ENCODE measurements at regions of chr1 and their contacts with region 1.

Region 1: GRCh38 chr1:25895365-25895993 is 10.7 kb downstream of the STMN1 start:
- DNase-seq: peak; percentile 93
- ATAC-seq: peak; percentile 97
- H3K4me3 Mint-ChIP-seq: no peak overlapping the region
- H3K27ac Mint-ChIP-seq: no peak overlapping the region
- H3K4me1 Mint-ChIP-seq: peaks cover 24% of the 10 kb centered on the region
- H3K27me3 Mint-ChIP-seq: no peaks in the 10 kb centered on the region

Region 2: GRCh38 chr1:25819576-25820246 is 75.8 kb before region 1 on chr1 and contains the start of gene MTFR1L:
- CTCF ChIA-PET with region 1: interaction called, 15 read pairs
- POLR2A ChIA-PET with region 1: no interaction called
- DNase-seq: peak; percentile 97
- ATAC-seq: peak; percentile 88
- H3K4me3 Mint-ChIP-seq: peak within 1 kb of the TSS; percentile 89
- H3K27ac Mint-ChIP-seq: peak within 1 kb of the TSS; percentile 93
- H3K4me1 Mint-ChIP-seq: peaks cover 30% of the 10 kb centered on the region
- H3K27me3 Mint-ChIP-seq: no peaks in the 10 kb centered on the region
- total RNA-seq, gene MTFR1L: 26.2 to 26.7 TPM

Region 3: DNA sequence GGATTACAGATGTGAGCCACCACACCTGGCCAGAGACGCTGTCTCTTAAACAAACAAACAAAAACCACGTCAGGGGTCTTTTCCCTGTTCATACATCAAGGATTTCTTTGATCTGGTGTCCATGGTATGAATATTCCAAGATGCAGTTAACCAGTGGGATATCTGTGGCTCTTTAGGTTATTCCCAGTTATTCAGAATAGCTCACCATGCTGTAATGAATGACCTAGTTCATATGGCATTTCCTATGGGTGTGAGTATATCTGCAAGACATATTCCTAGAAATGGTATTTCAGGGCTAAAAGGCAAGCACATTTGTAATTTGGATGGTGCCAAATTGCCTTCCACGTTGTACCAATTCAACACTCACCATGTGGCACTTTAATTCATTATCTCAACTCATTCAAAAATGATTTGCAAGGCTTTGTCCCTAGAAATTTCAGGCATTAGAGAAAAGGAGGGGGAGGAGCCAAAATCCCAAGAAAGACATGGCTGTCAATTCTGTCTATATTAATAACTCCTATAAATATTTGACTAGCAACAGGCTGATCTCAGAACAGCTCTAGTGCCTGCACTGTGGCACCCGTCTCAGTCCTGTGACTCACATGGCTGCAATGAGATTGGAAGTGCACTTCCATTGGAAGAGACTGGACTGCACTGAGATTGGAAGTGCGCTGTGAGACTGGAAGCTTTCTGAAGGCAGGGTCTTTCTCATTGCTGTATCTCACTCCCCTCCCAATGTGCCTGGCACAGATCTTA is 16.8 kb after region 1 on chr1:
- CTCF ChIA-PET with region 1: interaction called, 131 read pairs
- POLR2A ChIA-PET with region 1: no interaction called
- DNase-seq: no peak
- ATAC-seq: no peak
- H3K4me3 Mint-ChIP-seq: no peak overlapping the region
- H3K27ac Mint-ChIP-seq: no peak overlapping the region
- H3K4me1 Mint-ChIP-seq: no peaks in the 10 kb centered on the region
- H3K27me3 Mint-ChIP-seq: peaks cover 19% of the 10 kb centered on the region

Region 4: DNA sequence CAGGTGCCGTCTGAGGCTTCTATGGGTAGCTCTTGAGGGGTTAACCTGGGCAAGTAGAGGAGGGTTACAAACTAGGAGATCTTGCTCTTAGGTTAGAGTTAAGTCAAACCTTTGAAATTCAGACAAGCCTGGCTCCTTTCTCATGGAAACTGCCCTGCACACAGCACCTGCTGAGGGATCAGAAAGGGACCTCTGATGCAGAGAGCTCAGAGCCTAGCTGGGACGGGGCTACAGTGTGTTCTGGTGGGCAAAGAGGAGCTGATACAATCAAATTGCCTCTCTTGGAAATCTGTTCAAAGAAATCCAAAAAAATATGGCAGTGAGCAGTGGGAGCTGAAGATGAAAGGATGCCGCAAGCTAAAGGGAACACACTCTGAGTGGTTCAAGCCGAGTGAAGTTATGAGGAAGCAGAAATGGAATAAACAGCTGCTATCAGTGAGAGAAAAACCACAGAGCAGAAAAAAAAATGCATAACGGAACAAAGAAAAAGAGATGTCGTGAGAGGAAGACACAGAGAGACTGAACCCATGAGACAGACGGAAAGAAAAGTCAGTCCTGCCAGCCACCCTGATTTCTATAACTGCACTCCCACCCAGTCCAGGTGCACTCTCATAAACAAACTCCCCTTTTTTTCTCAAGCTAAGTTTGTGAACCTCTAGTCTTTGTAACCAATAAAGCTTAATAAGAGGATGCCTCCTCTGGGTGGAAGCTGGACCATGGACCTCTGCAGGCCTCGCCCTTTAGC is 75.8 kb after region 1 on chr1:
- CTCF ChIA-PET with region 1: interaction called, 18 read pairs
- POLR2A ChIA-PET with region 1: interaction called, 4 read pairs
- DNase-seq: peak; percentile 26
- ATAC-seq: peak; percentile 82
- H3K4me3 Mint-ChIP-seq: peak overlapping the region; percentile 16
- H3K27ac Mint-ChIP-seq: peak overlapping the region; percentile 80
- H3K4me1 Mint-ChIP-seq: peaks cover 19% of the 10 kb centered on the region
- H3K27me3 Mint-ChIP-seq: no peaks in the 10 kb centered on the region

Region 5: GRCh38 chr1:25990702-25991395 is 95.4 kb after region 1 on chr1:
- CTCF ChIA-PET with region 1: interaction called, 610 read pairs
- POLR2A ChIA-PET with region 1: interaction called, 48 read pairs
- DNase-seq: peak; percentile 68
- ATAC-seq: peak; percentile 92
- H3K4me3 Mint-ChIP-seq: peak overlapping the region; percentile 85
- H3K27ac Mint-ChIP-seq: peak overlapping the region; percentile 86
- H3K4me1 Mint-ChIP-seq: peaks cover 47% of the 10 kb centered on the region
- H3K27me3 Mint-ChIP-seq: no peaks in the 10 kb centered on the region

Region 6: GRCh38 chr1:26016388-26017188 is 121.1 kb after region 1 on chr1:
- CTCF ChIA-PET with region 1: interaction called, 11 read pairs
- POLR2A ChIA-PET with region 1: no interaction called
- DNase-seq: no peak
- ATAC-seq: peak; percentile 19
- H3K4me3 Mint-ChIP-seq: no peak overlapping the region
- H3K27ac Mint-ChIP-seq: peak overlapping the region; percentile 20
- H3K4me1 Mint-ChIP-seq: peaks cover 29% of the 10 kb centered on the region
- H3K27me3 Mint-ChIP-seq: peaks cover 13% of the 10 kb centered on the region

Region 7: DNA sequence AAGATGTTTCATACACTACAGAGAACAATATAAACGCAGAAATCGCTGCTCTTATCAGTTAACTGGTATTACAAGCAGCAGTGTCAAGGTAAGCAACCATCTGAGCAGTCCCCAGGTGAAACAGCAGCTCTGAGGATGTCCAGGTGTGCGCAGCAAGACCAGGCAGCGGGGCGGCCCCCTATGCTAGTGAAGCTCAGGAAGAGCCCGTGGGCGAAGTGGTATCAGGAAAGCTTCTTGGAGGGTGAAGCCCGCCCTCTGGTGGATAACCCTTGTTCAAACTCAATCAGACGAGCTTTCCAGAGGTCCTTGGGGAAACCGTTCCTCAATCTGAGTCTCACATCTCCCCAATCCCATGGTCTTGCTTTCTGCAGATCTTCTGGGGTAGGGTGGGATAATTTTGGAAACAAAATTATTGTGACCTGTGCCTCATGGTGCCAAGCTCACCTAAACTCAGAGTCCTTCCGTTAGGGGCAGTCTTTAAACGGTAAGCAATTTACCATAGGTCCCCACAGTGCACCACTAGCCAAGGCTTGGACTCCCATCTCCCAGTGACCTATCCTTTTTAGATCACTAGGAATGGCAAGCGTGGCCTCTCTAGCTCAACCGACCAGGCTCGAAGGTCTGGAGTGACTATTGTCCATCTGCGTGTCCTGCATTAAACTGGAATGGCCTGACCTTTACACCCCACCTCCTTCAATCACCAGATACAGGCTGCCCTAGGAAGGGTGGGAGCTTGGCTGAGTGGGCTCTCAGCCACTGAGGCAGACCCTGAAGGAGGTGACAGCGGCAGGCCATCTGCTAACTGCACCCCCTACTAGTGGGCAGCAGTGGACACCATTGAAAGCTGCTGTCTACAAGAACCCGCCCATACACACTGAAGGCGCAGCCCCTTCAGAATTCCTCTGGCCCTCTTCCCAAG is 249.8 kb after region 1 on chr1:
- CTCF ChIA-PET with region 1: interaction called, 19 read pairs
- POLR2A ChIA-PET with region 1: no interaction called
- DNase-seq: peak; percentile 86
- ATAC-seq: peak; percentile 95
- H3K4me3 Mint-ChIP-seq: no peak overlapping the region
- H3K27ac Mint-ChIP-seq: no peak overlapping the region
- H3K4me1 Mint-ChIP-seq: peaks cover 7% of the 10 kb centered on the region
- H3K27me3 Mint-ChIP-seq: peaks cover 23% of the 10 kb centered on the region

Measured in activated CD8-positive, alpha-beta T cell treated with anti-CD3 and anti-CD28 coated beads, Interleukin-2, amount 10 ng/mL, durations not matched to agents 7 days and 5 days (primary cell).